MCF 10A (cell line): ENCODE measurements at regions of chr10 and their contacts with region 1.

Region 1: GRCh38 chr10:99845837-99846382 is 63.5 kb downstream of the ABCC2 start:
- DNase-seq: peak; percentile 88
- H3K4me3 Mint-ChIP-seq: no peak overlapping the region
- H3K27ac Mint-ChIP-seq: no peak overlapping the region
- H3K4me1 Mint-ChIP-seq: no peaks in the 10 kb centered on the region
- H3K27me3 Mint-ChIP-seq: no peaks in the 10 kb centered on the region
- CTCF ChIP-seq: peak; percentile 82

Region 2: GRCh38 chr10:99788598-99789256 is 57.2 kb before region 1 on chr10:
- CTCF ChIA-PET with region 1: interaction called, 10 read pairs
- POLR2A ChIA-PET with region 1: no interaction called
- intact Hi-C with region 1: no loop called
- DNase-seq: peak; percentile 98
- H3K4me3 Mint-ChIP-seq: no peak overlapping the region
- H3K27ac Mint-ChIP-seq: no peak overlapping the region
- H3K4me1 Mint-ChIP-seq: peaks cover 30% of the 10 kb centered on the region
- H3K27me3 Mint-ChIP-seq: no peaks in the 10 kb centered on the region
- CTCF ChIP-seq: no peak

Region 3: DNA sequence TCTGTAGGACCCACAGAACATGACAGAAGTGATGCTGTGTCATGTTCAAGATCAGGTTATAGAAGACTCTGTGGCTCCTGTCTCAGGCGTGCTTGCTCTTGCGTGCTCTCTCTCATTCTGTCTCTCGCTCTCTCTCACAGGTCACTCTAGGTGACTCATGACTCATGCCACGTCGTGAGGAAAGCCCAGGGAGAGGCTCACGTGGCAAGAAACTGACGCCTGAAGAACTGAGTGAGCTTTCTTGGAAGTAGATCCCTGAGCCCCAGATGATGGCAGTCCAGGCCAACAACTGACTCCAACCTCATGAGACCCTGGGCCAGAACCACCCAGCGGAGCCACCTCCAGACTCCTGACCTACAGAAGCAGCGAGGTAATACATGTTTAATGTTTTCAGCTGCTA is 60.6 kb after region 1 on chr10:
- CTCF ChIA-PET with region 1: interaction called, 12 read pairs
- POLR2A ChIA-PET with region 1: interaction called, 3 read pairs
- intact Hi-C with region 1: no loop called
- DNase-seq: peak; percentile 96
- H3K4me3 Mint-ChIP-seq: no peak overlapping the region
- H3K27ac Mint-ChIP-seq: peak overlapping the region; percentile 80
- H3K4me1 Mint-ChIP-seq: peaks cover 14% of the 10 kb centered on the region
- H3K27me3 Mint-ChIP-seq: no peaks in the 10 kb centered on the region
- CTCF ChIP-seq: peak; percentile 38

Region 4: GRCh38 chr10:100053686-100054460 is 208.0 kb after region 1 on chr10:
- CTCF ChIA-PET with region 1: interaction called, 175 read pairs
- POLR2A ChIA-PET with region 1: no interaction called
- intact Hi-C with region 1: no loop called
- DNase-seq: no peak
- H3K4me3 Mint-ChIP-seq: no peak overlapping the region
- H3K27ac Mint-ChIP-seq: no peak overlapping the region
- H3K4me1 Mint-ChIP-seq: no peaks in the 10 kb centered on the region
- H3K27me3 Mint-ChIP-seq: no peaks in the 10 kb centered on the region
- CTCF ChIP-seq: no peak

Region 5: DNA sequence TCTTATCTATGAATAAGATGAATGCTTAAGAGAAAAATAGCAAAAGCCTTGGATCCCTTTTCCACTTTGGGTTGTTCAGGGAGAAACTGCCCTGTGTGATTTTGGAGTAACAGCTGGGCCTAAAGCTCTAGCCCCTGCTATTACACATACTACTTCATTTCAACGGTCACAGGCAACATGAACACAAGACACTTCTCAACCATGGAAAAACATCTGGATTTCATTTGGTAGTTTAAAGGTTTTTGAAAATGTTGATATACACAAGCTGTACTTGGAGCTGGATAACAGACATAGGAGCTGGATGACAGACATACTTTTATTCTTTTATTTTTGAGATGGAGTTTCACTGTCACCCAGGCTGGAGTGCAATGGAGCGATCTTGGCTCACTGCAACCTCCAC is 386.2 kb after region 1 on chr10:
- CTCF ChIA-PET with region 1: interaction called, 10 read pairs
- POLR2A ChIA-PET with region 1: no interaction called
- intact Hi-C with region 1: no loop called
- DNase-seq: no peak
- H3K4me3 Mint-ChIP-seq: no peak overlapping the region
- H3K27ac Mint-ChIP-seq: no peak overlapping the region
- H3K4me1 Mint-ChIP-seq: peaks cover 19% of the 10 kb centered on the region
- H3K27me3 Mint-ChIP-seq: no peaks in the 10 kb centered on the region
- CTCF ChIP-seq: no peak